Heart right ventricle (tissue), 16 donors: ENCODE measurements at regions of chr4 and their contacts with region 1.

Region 1: DNA sequence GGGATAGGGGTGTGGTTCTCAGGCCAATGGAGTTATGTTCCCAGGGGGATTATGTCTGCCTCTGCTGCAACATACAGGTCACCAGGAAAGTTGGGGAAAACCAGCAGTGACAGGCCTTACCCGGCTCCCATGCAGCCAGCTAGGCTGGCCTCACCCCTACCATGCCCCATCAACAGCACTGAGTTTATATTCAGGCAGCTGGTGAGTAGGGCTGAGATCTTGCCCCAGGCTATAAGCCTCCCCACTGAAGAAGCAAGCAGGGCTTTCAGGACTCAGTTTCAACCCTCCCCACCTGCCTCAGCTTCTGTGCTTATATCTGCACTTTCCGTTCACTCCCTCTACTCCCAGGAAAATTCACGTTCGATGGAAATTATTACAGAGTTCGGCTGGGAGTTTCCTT is 122.4 kb upstream of the PGRMC2 start:
- DNase-seq: no peak
- ATAC-seq: no peak
- H3K4me3 ChIP-seq: no peak overlapping the region
- H3K27ac ChIP-seq: no peak overlapping the region
- H3K4me1 ChIP-seq: no peaks in the 10 kb centered on the region
- H3K27me3 ChIP-seq: no peaks in the 10 kb centered on the region
- CTCF ChIP-seq: no peak

Region 2: GRCh38 chr4:128056796-128057195 is 353.2 kb before region 1 on chr4:
- intact Hi-C with region 1: no loop called
- DNase-seq: no peak
- ATAC-seq: no peak
- H3K4me3 ChIP-seq: no peak overlapping the region
- H3K27ac ChIP-seq: no peak overlapping the region
- H3K4me1 ChIP-seq: peaks cover 0 to 9% (median 0%) of the 10 kb centered on the region in 9 donors
- H3K27me3 ChIP-seq: no peaks in the 10 kb centered on the region
- CTCF ChIP-seq: no peak

Region 3: DNA sequence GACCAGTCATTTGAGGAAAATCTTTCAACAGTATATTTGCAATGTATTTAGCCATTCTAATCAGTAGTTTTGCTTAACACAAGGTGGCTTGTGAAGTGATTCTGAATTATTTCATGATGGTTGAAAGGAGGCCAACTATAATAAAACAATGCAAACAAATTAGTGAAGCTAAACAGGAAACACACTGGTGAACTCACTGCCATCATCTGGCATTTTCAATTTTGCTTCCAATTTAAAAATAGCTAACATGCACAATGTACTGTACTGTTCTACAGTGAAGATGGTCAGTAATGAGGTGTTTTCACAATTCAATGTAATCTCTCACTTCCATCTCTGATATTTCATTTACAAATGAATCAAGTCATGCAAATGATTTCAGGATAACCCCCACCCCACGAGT is 153.5 kb before region 1 on chr4:
- intact Hi-C with region 1: no loop called
- DNase-seq: no peak
- ATAC-seq: no peak
- H3K4me3 ChIP-seq: no peak overlapping the region
- H3K27ac ChIP-seq: no peak overlapping the region
- H3K4me1 ChIP-seq: no peaks in the 10 kb centered on the region
- H3K27me3 ChIP-seq: no peaks in the 10 kb centered on the region
- CTCF ChIP-seq: no peak

Region 4: DNA sequence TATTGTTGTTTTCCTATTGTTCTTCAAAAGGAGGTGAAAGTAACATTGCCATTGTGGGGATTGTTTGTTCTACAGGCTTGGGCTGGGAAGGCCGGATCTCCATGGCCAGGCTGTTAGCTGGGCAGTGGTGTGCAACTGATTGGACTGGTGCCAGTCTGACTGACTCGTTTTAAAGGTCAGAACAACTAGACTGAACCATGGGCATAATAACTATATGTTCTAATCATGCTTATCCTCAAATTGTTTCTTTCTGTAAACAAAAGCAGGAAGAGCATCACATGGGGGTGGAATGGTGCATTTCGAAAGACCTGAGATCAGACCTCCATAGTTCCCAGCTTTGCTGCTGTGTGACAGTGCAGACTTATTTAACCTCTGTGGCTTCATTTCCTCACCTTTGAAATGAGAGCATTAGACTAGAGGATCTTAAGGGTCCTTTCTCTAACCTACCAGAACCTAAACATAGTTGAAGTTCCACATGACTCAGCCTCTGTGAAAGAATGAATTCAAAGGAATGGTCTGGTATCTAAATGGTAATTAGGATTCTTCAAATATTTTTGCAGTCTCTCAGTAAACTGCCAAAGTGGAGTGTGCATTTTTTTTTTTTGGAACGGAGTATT is 55.7 kb before region 1 on chr4:
- intact Hi-C with region 1: no loop called
- DNase-seq: peak; percentile 30 to 33
- ATAC-seq: peak in 3 of 8 donors; percentile 19 to 50 (median 22)
- H3K4me3 ChIP-seq: no peak overlapping the region
- H3K27ac ChIP-seq: peak overlapping the region in 5 of 10 donors; percentile 30 to 49 (median 36)
- H3K4me1 ChIP-seq: peaks cover 0 to 50% (median 37%) of the 10 kb centered on the region in 9 donors
- H3K27me3 ChIP-seq: no peaks in the 10 kb centered on the region
- CTCF ChIP-seq: no peak

Region 5: DNA sequence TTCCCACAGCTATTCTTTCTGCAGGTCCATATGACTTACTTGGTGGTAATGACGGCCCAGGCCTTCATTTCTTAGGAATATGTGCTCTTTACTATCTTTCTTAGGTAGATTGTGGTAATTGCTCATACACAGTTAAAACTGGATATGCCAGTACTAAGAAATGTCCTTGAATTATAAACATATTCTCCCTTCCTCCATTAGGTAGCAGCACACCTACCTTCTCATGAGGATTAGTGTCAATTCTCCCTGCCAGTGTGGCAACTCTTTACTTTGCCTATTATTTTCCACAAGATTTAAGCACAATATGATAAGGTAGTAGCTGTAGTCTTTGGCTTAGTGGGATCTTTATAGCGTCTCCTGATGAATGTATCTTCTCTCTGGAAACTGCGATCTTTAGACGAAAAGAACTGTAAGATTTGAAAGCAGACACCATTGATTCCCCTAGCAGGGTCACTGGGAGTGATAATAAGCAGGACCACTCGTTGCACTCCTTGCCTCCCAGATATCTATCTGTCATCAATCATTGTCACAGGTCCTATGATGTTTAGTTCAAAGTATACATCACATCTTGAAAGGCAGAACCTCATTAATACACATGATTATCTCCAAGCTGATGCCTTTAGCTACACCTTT is 1926.7 kb after region 1 on chr4:
- intact Hi-C with region 1: loop called in 1 of 10 experiments (anchors 5 kb)
- DNase-seq: no peak
- ATAC-seq: no peak
- H3K4me3 ChIP-seq: no peak overlapping the region
- H3K27ac ChIP-seq: no peak overlapping the region
- H3K4me1 ChIP-seq: no peaks in the 10 kb centered on the region
- H3K27me3 ChIP-seq: no peaks in the 10 kb centered on the region
- CTCF ChIP-seq: peak in 5 of 9 donors; percentile 34 to 59 (median 43)